Posterior cingulate gyrus (tissue), 11 donors: ENCODE measurements at regions of chr14 and their contacts with region 1.

Region 1: DNA sequence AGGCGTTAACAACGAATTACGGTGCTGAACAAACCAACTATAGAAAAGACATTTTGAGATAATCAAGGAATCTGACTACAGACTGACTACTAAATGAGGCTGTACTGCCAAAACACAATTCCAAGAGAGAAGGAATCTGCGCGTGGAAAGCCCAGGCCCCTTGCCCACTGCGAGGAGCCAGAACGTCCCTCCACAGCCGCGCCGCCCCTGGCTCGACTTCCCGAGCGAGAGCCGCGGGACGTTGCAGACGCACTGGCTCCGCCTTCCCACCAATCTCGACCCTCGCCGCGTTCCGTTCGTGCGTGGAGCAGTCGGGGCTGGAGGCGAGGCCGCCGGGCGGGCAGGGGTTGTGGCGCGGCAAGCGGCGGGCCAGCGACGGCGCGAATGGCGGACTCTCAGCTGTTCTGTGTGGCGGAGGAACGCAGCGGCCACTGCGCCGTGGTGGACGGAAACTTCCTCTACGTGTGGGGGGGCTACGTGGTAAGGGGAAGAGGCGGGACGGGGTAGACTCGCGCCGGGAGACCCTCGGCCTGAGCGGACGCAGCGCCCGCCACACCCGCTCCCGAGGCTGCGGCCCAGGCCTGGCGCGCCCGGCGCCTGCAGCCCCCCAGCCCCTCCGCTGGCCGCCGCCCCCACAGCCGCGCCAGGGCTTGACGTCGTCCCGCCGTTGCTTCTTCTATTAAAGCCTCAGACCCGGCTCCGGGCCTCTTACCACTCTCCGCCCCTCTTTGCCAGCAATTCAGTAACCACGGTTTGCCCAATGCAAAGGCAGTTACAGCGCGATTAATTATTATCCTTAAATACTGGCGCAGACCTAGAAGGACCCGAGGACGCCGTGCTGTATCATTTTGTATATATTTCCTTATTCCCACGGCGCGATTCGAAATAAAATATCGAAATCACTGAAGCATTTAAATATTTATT is at the start of gene KLHDC1:
- DNase-seq: peak; percentile 82 to 98 (median 90)

Region 2: GRCh38 chr14:49492131-49492530 is 200.9 kb before region 1 on chr14:
- intact Hi-C with region 1: no loop called
- DNase-seq: no peak

Region 3: GRCh38 chr14:49767562-49768300 is 74.7 kb after region 1 on chr14 and contains the start of gene KLHDC2:
- intact Hi-C with region 1: loop called (anchors 2 kb)
- DNase-seq: peak; percentile 80 to 98 (median 88)

Region 4: DNA sequence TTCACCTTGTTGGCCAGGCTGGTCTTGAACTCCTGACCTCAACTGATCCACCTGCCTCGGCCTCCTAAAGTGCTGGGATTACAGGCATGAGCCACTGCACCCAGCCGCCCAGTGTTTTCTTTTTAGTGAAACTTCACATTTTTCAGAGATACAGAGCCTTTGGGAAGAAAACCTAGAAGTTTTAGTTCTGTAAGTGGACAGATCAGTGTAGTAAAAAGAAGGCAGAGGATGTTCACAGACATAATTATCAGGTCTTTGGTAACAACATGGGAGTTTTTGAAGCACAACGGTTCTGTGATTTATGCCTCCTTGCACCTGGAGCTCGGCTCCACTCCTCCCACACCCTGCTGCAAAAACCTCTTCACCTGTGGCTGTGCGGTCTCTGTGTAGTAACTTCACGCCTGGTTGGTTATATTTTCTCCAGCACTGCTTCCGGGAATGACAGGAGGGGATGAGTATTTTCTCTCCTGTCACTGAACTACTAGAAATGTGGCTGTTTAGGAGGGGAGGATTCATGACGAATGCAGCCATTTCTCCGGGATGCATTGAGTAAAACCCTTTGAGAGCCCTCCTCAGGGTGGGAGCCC is 266.8 kb after region 1 on chr14:
- intact Hi-C with region 1: no loop called
- DNase-seq: no peak